Cardiac septum (tissue), 1 donor: ENCODE measurements at regions of chr11 and their contacts with region 1.

Region 1: DNA sequence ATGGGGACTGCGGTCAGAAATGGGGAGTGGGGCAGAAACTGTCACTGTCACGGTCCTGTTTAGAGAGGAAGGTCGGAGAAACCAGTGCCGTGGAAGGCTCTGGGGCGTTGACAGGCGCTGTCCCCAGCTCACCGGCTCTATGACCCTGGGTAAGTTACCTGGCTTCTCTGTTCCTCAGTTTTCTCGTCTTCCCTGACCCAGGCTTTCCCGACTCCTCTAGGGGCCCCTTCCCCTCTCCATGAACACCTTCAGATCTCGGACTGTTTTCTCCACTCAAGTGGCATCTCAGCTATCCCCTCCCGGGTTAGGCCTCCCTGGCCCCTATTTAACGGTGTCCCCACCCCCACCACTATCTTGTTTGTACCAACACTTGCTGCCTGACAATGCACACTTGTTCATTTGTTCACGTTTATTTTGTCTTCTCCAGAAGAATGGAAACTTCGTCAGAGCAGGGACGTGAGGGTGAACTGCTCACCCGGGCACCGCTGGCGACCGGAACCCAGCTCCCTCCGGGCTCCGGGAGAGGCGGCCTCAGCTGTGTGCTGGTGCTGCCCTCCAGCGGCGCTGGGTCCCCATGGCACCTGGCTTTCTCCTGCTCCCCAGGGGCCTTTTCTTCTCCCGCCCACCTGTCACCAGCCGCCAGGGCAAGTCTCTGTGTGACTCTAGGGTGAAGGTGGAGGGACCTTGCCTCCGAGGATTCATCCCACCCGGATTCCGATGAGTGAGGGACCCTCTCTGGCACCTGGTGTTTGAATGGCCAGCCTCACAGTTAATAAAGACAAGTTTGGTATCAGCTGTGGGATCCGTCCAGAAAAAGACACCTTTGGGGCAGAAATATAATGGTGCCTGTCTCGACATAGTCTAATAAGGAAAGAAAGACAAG is 33.1 kb upstream of the SLC35C1 start:
- DNase-seq: peak; percentile 93

Region 2: GRCh38 chr11:45339729-45340519 is 431.9 kb before region 1 on chr11:
- intact Hi-C with region 1: loop called (anchors 5 kb)
- DNase-seq: peak; percentile 96

Region 3: DNA sequence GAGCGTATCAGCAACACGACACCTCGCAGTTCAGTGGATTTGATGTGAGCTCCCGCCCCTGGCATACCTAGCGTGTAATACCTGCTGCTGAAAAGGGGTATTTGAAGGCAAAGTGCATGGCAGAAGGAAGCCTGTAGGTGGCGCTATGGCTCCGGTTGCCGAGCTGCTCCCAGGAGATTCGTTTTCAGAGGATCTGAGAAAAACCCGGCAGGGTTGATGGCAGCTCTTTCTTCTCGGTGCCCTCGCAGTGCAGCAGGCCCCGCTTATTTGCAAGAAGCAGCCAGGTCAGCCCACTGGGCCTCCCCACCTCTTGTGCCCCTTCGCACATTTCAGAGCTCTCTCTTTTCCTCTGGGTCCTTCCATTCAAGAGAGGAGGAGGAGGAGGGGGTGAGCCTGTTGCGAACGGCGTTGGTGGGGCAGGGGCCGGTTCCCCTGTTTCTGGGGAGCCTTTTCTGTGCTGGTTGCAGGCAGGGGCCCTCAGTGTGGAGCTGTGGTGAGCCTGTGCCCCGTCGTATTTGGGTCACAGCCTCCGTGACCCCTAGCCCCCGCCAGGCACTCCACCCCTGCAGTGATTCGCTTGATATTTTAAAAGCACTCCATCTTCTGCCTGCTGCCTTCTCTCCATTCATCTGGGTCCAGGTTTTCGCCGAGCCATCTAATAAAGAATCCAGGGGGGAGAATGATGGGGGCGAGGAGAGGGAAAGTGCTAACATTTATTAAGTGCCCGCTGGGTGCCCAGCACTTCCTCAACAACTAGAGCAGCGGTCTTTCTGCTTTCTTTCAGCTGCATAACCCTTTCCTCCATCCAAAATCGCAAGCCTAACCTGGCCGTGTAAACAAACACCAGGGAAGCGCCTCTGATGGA is 400.3 kb before region 1 on chr11:
- intact Hi-C with region 1: loop called (anchors 2 kb)
- DNase-seq: no peak

Region 4: GRCh38 chr11:45538363-45538762 is 233.4 kb before region 1 on chr11:
- intact Hi-C with region 1: loop called (anchors 2 kb)
- DNase-seq: no peak

Region 5: DNA sequence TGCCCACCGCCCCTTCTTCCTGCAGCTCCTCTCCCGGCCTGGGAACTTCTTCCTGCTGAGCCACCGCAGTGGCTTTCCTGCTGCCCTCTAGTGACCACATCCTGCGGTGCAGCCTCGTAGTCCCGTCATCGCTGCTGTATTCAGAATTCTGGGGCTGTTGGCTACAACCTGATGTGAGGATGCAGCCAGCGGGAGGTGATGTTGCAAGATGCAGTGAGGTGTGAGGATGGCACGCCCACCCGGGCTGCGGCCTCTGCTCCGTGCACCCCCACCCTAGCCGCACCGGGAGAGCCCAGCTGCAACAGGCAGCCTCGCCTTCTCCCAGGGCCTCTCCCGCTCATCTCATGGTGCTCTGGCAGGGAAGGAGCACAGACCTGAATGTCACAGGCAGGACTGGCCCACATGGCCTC is 116.5 kb before region 1 on chr11:
- intact Hi-C with region 1: loop called (anchors 5 kb)
- DNase-seq: peak; percentile 80